ENCODE measurements at regions of chrX and their contacts with region 1.

Region 1: GRCh38 chrX:112820364-112821268 is 20.0 kb downstream of the AMOT start:
- DNase-seq: no peak
- ATAC-seq: peak; percentile 69

Region 2: DNA sequence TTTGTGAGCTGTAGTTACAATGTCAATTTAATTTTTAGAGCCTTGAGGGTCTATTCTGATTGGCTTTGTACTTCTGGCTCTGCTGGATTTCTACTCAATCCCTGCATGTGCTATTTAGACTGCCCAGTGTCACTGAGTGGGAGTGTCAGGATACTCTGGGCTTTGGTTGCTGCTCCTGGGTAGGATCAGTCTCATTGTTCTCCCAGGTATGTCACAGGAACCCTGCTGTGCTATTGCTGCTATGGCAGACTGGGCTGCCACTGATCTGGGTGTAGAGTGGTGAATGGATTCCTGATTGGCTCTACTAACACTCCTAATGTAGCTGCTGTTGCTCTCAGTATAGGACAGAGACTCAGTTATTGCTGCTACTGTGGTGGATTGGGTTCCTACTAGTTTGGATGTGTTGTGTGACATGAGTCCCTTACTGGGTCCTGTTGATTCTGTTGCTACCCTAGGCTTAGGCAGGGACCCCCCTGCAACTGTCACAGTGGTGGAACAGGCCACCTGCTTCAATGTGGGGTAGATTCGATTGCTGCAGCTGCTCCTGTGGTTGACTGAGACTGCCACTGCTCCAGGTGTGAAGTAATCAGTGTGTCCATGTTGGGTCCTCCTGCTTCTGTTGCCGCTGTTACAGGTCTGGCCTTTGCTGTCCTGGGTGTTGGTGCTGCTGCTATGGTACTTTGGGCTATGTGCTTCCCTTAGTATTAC is 727.8 kb after region 1 on chrX:
- intact Hi-C with region 1: loop called (anchors 5 kb)
- DNase-seq: no peak
- ATAC-seq: no peak

Measured in sciatic nerve (tissue), 2 donors.